Activated CD4-positive, alpha-beta memory T cell treated with anti-CD3 and anti-CD28 coated beads, Interleukin-2, amount 10 ng/mL, durations not matched to agents 7 days and 5 days (primary cell): ENCODE measurements at regions of chr16 and their contacts with region 1.

Region 1: DNA sequence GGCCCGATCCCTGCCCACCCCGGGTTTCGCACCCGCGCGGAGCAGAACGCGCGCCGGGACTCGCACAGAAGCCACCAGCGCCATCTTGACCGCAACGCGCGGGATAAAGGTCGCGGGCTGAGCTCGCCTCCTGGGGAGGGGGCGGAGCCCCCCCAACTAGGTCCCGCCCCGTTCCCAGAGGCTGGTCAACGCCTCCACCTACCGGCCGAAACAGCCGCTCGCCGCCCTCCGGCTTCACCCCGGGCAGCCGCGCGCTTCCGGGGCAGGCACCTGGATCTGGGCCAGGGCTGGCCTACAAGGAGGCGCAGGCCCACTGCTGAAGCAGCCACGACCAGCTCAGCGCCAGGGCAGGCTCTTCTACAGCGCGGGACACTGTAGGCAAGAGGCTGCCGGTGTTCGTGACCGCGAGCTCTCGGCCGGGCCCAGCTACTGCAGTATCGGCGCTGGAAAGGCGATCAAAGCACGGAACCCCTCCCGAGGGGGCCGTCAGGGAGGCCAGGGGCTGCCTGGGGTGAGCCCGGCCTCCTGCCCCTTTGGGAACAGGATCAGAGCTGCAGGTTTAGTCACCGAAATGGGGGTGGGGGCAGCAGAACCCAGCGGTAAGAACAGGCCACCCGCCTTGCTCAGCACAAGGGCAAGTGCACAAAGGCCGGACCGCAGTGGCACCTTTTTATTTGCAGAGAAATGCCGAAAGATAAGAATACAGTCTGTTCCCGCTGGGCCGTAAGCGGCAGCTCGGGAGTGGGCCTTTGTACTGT is at the start of gene ECI1:
- DNase-seq: peak; percentile 88
- H3K4me3 Mint-ChIP-seq: peak within 1 kb of the TSS; percentile 90
- H3K27ac Mint-ChIP-seq: peak within 1 kb of the TSS; percentile 92
- H3K4me1 Mint-ChIP-seq: peaks cover 20% of the 10 kb centered on the region
- H3K27me3 Mint-ChIP-seq: no peaks in the 10 kb centered on the region
- total RNA-seq, gene ECI1: 43.0 to 44.8 TPM

Region 2: GRCh38 chr16:1820096-1820945 is 431.3 kb before region 1 on chr16:
- CTCF ChIA-PET with region 1: no interaction called
- POLR2A ChIA-PET with region 1: no interaction called
- DNase-seq: no peak
- H3K4me3 Mint-ChIP-seq: no peak overlapping the region
- H3K27ac Mint-ChIP-seq: no peak overlapping the region
- H3K4me1 Mint-ChIP-seq: peaks cover 16% of the 10 kb centered on the region
- H3K27me3 Mint-ChIP-seq: no peaks in the 10 kb centered on the region

Region 3: DNA sequence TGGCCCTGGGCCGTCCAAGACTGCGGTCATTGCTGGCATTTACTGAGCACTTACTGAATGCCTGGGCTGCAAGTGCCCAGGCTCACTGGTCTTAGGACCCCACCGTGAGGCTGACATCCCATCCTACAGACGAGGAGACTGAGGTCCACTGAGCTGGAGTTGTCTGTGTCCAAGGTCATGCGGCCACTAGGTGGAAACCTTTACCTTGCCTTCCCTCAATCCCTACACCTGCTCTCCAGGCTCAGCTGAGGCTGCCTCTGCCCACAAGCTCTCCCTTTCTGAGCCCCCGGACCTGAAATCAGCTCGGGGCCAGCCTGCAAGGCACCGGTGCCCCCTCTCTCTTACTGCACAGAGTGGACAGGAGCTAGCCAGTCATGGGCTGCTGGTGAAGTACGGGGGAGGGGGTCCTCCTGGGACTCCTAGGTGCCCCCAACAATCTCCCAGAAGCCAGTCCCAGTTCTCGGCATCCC is 56.8 kb before region 1 on chr16:
- CTCF ChIA-PET with region 1: interaction called, 15 read pairs
- POLR2A ChIA-PET with region 1: interaction called, 4 read pairs
- DNase-seq: peak; percentile 55
- H3K4me3 Mint-ChIP-seq: no peak overlapping the region
- H3K27ac Mint-ChIP-seq: no peak overlapping the region
- H3K4me1 Mint-ChIP-seq: peaks cover 3% of the 10 kb centered on the region
- H3K27me3 Mint-ChIP-seq: peaks cover 43% of the 10 kb centered on the region

Region 4: GRCh38 chr16:2205104-2205966 is 46.3 kb before region 1 on chr16 and contains the start of gene MLST8:
- CTCF ChIA-PET with region 1: no interaction called
- POLR2A ChIA-PET with region 1: interaction called, 10 read pairs
- DNase-seq: peak; percentile 91
- H3K4me3 Mint-ChIP-seq: peak within 1 kb of the TSS; percentile 73
- H3K27ac Mint-ChIP-seq: peak within 1 kb of the TSS; percentile 73
- H3K4me1 Mint-ChIP-seq: peaks cover 30% of the 10 kb centered on the region
- H3K27me3 Mint-ChIP-seq: peaks cover 9% of the 10 kb centered on the region
- total RNA-seq, gene MLST8: 32.6 to 33.7 TPM

Region 5: DNA sequence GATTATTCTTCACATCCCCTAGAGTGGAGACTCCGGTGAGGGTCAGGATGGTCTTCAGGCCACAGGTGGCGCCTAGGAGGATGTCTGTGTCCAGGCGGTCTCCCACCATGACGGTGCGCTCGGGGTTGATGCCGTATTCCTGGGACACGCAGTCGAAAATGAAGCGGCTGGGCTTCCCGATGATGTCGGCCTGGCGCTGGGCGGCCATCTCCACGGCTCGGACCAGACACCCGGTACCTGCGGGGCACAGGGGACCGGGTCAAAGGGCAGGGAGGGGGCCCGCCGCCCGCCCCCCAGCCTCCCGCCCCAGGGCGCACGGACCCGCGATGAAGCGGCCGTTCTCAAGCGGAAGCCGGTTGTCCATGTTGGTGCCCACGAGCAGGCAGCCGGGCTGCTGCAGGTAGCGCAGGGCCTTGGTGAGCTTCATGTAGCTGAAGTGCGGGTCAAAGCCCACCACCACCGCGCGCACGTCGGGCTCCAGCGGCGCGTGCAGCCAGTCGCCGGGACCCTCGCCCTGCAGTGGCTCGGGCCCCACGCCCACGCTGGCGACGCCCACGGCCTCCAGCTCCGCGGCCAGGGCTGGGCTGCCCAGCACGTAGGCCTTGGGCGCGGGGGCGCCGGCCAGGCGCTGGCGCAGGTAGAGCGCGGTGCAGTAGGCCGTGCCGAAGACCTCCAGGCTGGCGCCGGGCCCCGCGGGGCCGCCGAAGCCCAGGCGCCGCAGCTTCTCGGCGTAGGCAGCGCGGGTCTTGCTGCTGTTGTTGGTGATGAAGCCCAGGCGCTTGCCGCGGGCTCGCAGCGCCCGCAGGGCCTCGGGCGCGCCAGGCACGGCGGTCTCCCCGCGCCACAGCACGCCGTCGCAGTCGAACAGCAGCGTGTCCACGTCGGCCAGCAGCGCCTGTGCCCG is 37.6 kb before region 1 on chr16:
- CTCF ChIA-PET with region 1: interaction called, 8 read pairs
- POLR2A ChIA-PET with region 1: interaction called, 24 read pairs
- DNase-seq: no peak
- H3K4me3 Mint-ChIP-seq: peak overlapping the region; percentile 76
- H3K27ac Mint-ChIP-seq: peak overlapping the region; percentile 52
- H3K4me1 Mint-ChIP-seq: peaks cover 25% of the 10 kb centered on the region
- H3K27me3 Mint-ChIP-seq: no peaks in the 10 kb centered on the region

Region 6: GRCh38 chr16:2236337-2237101 is 15.1 kb before region 1 on chr16 and contains the start of gene DNASE1L2:
- CTCF ChIA-PET with region 1: interaction called, 4 read pairs
- POLR2A ChIA-PET with region 1: interaction called, 11 read pairs
- DNase-seq: no peak
- H3K4me3 Mint-ChIP-seq: no peak within 1 kb of the TSS
- H3K27ac Mint-ChIP-seq: no peak within 1 kb of the TSS
- H3K4me1 Mint-ChIP-seq: no peaks in the 10 kb centered on the region
- H3K27me3 Mint-ChIP-seq: no peaks in the 10 kb centered on the region
- total RNA-seq, gene DNASE1L2: 2.0 to 2.3 TPM

Region 7: DNA sequence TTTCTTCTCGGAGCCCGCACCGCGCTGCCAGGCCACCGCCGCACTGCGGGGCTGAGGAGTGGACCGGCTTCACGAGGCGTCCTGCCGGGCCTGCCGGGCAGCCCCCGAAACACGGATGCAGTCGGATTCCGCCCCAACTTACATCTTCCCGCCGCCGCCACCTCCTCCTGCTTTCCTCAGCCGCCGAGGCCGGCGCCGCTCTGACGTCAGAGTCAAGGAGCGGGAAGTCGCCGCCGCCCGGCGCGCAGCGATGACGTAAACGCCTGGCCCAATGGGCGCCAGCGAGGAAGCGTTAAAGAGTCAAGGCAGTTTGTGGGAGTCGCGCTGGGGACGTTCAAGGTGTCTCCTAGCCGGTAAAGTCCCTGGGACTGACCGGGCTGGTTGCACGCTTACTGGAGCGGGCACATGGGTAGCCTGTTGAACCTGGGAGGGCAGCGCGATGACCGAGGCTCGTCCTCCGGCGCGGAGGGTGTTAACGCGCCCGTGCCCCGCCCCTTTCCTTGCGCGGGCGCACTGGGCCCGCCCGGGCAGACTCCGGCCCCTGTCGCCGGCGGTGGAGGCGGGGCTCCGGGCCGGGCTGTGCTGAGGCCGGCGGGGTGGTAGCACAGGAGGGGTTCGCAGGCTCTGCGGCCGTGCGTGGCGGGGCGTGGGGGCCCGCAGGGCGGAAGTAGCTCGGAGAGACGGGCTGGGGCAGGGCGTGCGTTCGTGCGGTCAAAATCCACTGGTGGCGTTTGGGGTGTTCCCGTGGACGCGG is 16.4 kb after region 1 on chr16 and contains the start of gene RNPS1:
- CTCF ChIA-PET with region 1: interaction called, 6 read pairs
- POLR2A ChIA-PET with region 1: interaction called, 43 read pairs
- DNase-seq: peak; percentile 96
- H3K4me3 Mint-ChIP-seq: peak within 1 kb of the TSS; percentile 95
- H3K27ac Mint-ChIP-seq: peak within 1 kb of the TSS; percentile 97
- H3K4me1 Mint-ChIP-seq: peaks cover 40% of the 10 kb centered on the region
- H3K27me3 Mint-ChIP-seq: no peaks in the 10 kb centered on the region
- total RNA-seq, gene RNPS1: 218 to 222 TPM